CD4-positive, alpha-beta T cell (primary cell): ENCODE measurements at regions of chr1 and their contacts with region 1.

Region 1: GRCh38 chr1:30732277-30732996 is 9.1 kb upstream of the MATN1 start:
- DNase-seq: no peak
- ATAC-seq: peak; percentile 73
- H3K4me3 ChIP-seq: no peak overlapping the region
- H3K4me3 Mint-ChIP-seq: no peak overlapping the region
- H3K27ac ChIP-seq: no peak overlapping the region
- H3K27ac Mint-ChIP-seq: peak overlapping the region; percentile 96
- H3K4me1 ChIP-seq: peaks cover 26% of the 10 kb centered on the region
- H3K4me1 Mint-ChIP-seq: peaks cover 19% of the 10 kb centered on the region
- H3K27me3 ChIP-seq: no peaks in the 10 kb centered on the region
- H3K27me3 Mint-ChIP-seq: no peaks in the 10 kb centered on the region
- CTCF ChIP-seq: no peak

Region 2: DNA sequence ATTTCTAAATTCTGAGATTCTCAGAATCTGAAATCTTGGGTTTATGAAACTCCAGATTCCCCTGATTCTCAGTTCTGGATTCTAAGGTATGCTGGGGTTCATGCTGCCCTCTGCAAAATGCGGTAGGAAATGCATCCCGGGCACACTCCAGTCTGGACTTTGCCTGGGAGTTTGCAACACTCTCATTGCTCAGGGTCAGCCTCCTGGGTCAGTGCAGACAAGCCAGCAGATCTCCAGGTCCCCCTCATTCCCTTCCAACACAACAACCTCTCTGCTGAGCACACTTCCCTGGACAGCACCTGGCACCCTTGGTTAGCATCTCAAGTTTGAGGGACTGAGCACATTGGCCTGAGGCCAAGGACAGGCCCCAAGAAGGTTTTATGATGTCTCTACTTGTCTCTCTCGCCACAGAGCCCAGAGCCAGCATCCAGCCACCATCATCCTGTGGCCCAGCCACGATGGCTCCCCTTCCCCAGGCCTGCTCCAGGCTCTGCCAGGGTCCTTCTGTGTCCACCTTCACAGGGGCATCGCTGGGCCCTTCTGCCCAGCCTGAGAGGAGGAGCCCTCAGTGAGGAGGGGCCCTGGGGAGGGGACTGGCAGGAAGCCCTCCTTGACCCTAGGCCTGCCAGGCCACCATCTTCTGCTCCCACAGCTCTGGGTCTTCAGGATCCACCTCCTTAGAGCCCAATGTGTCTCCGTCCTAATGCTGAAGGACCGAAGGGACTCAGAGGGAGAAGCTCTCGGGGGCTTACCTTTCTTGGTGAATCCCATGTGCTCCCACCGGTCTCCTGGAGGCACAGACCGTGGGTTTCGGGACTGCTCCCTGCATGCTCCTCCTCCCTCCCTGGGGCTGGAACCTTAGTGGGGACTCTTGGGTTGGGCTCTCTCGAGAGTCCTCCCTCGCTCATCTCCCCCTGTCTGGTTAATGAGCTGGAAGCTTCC is 945.4 kb before region 1 on chr1:
- CTCF ChIA-PET with region 1: no interaction called
- POLR2A ChIA-PET with region 1: no interaction called
- intact Hi-C with region 1: no loop called
- DNase-seq: no peak
- ATAC-seq: no peak
- H3K4me3 ChIP-seq: no peak overlapping the region
- H3K4me3 Mint-ChIP-seq: no peak overlapping the region
- H3K27ac ChIP-seq: no peak overlapping the region
- H3K27ac Mint-ChIP-seq: no peak overlapping the region
- H3K4me1 ChIP-seq: no peaks in the 10 kb centered on the region
- H3K4me1 Mint-ChIP-seq: no peaks in the 10 kb centered on the region
- H3K27me3 ChIP-seq: peaks cover 5% of the 10 kb centered on the region in 2 experiments
- H3K27me3 Mint-ChIP-seq: peaks cover 20% of the 10 kb centered on the region
- CTCF ChIP-seq: no peak

Region 3: GRCh38 chr1:30743584-30744059 is 11.2 kb after region 1 on chr1:
- CTCF ChIA-PET with region 1: interaction called, 9 read pairs
- POLR2A ChIA-PET with region 1: interaction called, 74 read pairs
- intact Hi-C with region 1: no loop called
- DNase-seq: peak; percentile 50 to 93 (median 64)
- ATAC-seq: peak; percentile 81
- H3K4me3 ChIP-seq: peak overlapping the region; percentile 42
- H3K4me3 Mint-ChIP-seq: peak overlapping the region; percentile 83
- H3K27ac ChIP-seq: peak overlapping the region; percentile 95 to 97
- H3K27ac Mint-ChIP-seq: peak overlapping the region; percentile 96
- H3K4me1 ChIP-seq: peaks cover 99% of the 10 kb centered on the region
- H3K4me1 Mint-ChIP-seq: peaks cover 100% of the 10 kb centered on the region
- H3K27me3 ChIP-seq: no peaks in the 10 kb centered on the region
- H3K27me3 Mint-ChIP-seq: no peaks in the 10 kb centered on the region
- CTCF ChIP-seq: no peak

Region 4: GRCh38 chr1:30748699-30749401 is 16.4 kb after region 1 on chr1:
- CTCF ChIA-PET with region 1: interaction called, 9 read pairs
- POLR2A ChIA-PET with region 1: interaction called, 74 read pairs
- intact Hi-C with region 1: no loop called
- DNase-seq: peak in 4 of 14 experiments; percentile 27 to 56 (median 46)
- ATAC-seq: no peak
- H3K4me3 ChIP-seq: peak overlapping the region; percentile 34
- H3K4me3 Mint-ChIP-seq: peak overlapping the region; percentile 85
- H3K27ac ChIP-seq: peak overlapping the region; percentile 95 to 97
- H3K27ac Mint-ChIP-seq: peak overlapping the region; percentile 96
- H3K4me1 ChIP-seq: peaks cover 99% of the 10 kb centered on the region
- H3K4me1 Mint-ChIP-seq: peaks cover 100% of the 10 kb centered on the region
- H3K27me3 ChIP-seq: no peaks in the 10 kb centered on the region
- H3K27me3 Mint-ChIP-seq: no peaks in the 10 kb centered on the region
- CTCF ChIP-seq: no peak

Region 5: DNA sequence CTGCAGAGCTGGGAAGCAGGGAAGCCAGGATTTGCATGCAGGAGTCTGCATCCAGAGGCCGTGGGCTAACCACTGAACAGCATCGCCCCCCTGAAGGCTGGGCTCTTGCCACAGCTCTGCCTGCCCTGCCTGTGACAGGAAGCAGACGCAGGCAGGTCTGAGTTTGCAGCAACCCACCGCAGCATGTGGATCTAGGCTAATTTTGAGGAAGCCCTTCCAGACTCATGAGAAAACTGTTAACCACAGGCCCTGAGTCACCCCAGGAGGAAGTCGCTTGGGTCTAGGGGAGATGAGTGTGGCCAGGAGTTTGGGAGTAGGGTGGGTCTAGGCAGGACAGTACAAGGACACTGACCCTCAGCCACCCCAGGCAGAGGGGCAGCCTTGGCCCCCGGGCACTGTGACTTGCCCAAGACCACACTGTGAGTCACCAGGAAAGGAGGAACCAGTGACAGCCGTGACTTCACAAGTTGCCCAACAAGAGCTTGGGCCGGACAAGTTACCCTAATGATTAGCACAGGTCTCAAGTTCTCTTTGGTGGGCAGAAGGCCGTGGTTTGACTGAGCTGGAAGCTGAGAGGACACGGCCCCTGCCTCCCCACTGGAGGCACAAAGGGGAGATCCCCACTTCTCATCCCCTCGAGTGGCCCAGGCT is 24.2 kb after region 1 on chr1:
- CTCF ChIA-PET with region 1: no interaction called
- POLR2A ChIA-PET with region 1: interaction called, 21 read pairs
- intact Hi-C with region 1: no loop called
- DNase-seq: peak; percentile 48 to 91 (median 71)
- ATAC-seq: peak; percentile 64
- H3K4me3 ChIP-seq: peak overlapping the region; percentile 99
- H3K4me3 Mint-ChIP-seq: peak overlapping the region; percentile 96
- H3K27ac ChIP-seq: peak overlapping the region; percentile 95 to 97
- H3K27ac Mint-ChIP-seq: peak overlapping the region; percentile 96
- H3K4me1 ChIP-seq: peaks cover 91% of the 10 kb centered on the region
- H3K4me1 Mint-ChIP-seq: peaks cover 98% of the 10 kb centered on the region
- H3K27me3 ChIP-seq: no peaks in the 10 kb centered on the region
- H3K27me3 Mint-ChIP-seq: no peaks in the 10 kb centered on the region
- CTCF ChIP-seq: no peak

Region 6: DNA sequence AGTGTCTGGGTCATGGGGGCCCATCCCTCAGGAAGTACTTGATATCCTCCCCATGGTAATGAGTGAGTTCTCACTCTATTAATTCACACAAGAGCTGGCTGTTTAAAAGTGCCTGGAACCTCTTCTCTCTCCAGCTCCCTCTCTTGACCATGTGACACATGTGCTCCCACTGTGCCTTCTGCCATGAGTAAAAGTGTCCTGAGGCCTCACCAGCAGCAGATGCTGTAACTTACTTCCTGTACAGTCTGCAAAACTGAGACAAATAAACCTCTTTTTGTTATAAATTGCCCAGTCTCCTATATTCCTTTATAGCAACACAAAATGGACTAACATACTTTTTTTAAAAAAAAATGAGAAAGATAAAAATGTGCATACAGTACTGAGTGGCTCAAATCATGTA is 309.1 kb after region 1 on chr1:
- CTCF ChIA-PET with region 1: no interaction called
- POLR2A ChIA-PET with region 1: no interaction called
- intact Hi-C with region 1: no loop called
- DNase-seq: no peak
- ATAC-seq: no peak
- H3K4me3 ChIP-seq: no peak overlapping the region
- H3K4me3 Mint-ChIP-seq: no peak overlapping the region
- H3K27ac ChIP-seq: no peak overlapping the region
- H3K27ac Mint-ChIP-seq: peak overlapping the region; percentile 47
- H3K4me1 ChIP-seq: peaks cover 19% of the 10 kb centered on the region
- H3K4me1 Mint-ChIP-seq: peaks cover 59% of the 10 kb centered on the region
- H3K27me3 ChIP-seq: no peaks in the 10 kb centered on the region
- H3K27me3 Mint-ChIP-seq: no peaks in the 10 kb centered on the region
- CTCF ChIP-seq: no peak